Endothelial cell of umbilical vein (primary cell): ENCODE measurements at regions of chr12 and their contacts with region 1.

Region 1: GRCh38 chr12:32399337-32400113 is at the start of gene FGD4:
- DNase-seq: peak; percentile 92
- H3K4me3 ChIP-seq: peak within 1 kb of the TSS; percentile 26 to 83 (median 76)
- H3K27ac ChIP-seq: peak within 1 kb of the TSS; percentile 19
- H3K4me1 ChIP-seq: peaks cover 6% of the 10 kb centered on the region
- H3K27me3 ChIP-seq: no peaks in the 10 kb centered on the region
- CTCF ChIP-seq: peak; percentile 60 to 89
- POLR2A ChIP-seq: peak; percentile 62
- total RNA-seq, gene FGD4: 44.7 and 44.8 TPM in 2 replicates

Region 2: GRCh38 chr12:32671930-32672780 is 272.6 kb after region 1 on chr12:
- CTCF ChIA-PET with region 1: interaction called, 21 read pairs
- POLR2A ChIA-PET with region 1: no interaction called
- dilution Hi-C with region 1: no loop called
- intact Hi-C with region 1: loop called (anchors 1 kb)
- DNase-seq: peak; percentile 85
- H3K4me3 ChIP-seq: no peak overlapping the region
- H3K27ac ChIP-seq: no peak overlapping the region
- H3K4me1 ChIP-seq: peaks cover 6% of the 10 kb centered on the region
- H3K27me3 ChIP-seq: no peaks in the 10 kb centered on the region
- CTCF ChIP-seq: peak; percentile 45 to 65
- POLR2A ChIP-seq: no peak